ENCODE measurements at regions of chr14 and their contacts with region 1.

Region 1: GRCh38 chr14:20855652-20856291 is 35.4 kb upstream of the RNASE3 start:
- DNase-seq: peak in 4 of 5 donors; percentile 81 to 93 (median 88)
- H3K4me3 ChIP-seq: no peak overlapping the region
- H3K27ac ChIP-seq: no peak overlapping the region
- H3K4me1 ChIP-seq: peaks cover 0 to 3% (median 0%) of the 10 kb centered on the region in 3 donors
- H3K27me3 ChIP-seq: no peaks in the 10 kb centered on the region
- CTCF ChIP-seq: peak; percentile 90

Region 2: GRCh38 chr14:20690848-20691523 is 164.8 kb before region 1 on chr14:
- intact Hi-C with region 1: loop called (anchors 10 kb)
- DNase-seq: peak in 4 of 5 donors; percentile 58 to 87 (median 72)
- H3K4me3 ChIP-seq: no peak overlapping the region
- H3K27ac ChIP-seq: no peak overlapping the region
- H3K4me1 ChIP-seq: peaks cover 0 to 22% (median 7%) of the 10 kb centered on the region in 3 donors
- H3K27me3 ChIP-seq: no peaks in the 10 kb centered on the region
- CTCF ChIP-seq: peak; percentile 90